ENCODE measurements at regions of chr4 and their contacts with region 1.

Region 1: GRCh38 chr4:153344131-153345010 is at the start of gene MND1:
- DNase-seq: peak; percentile 64
- ATAC-seq: peak; percentile 90
- H3K4me3 ChIP-seq: peak within 1 kb of the TSS; percentile 79 to 83 (median 81)
- H3K27ac ChIP-seq: peak within 1 kb of the TSS; percentile 72
- H3K4me1 ChIP-seq: peaks cover 44% of the 10 kb centered on the region
- H3K27me3 ChIP-seq: no peaks in the 10 kb centered on the region; a peak in 1 of 5 replicates
- CTCF ChIP-seq: peak; percentile 86
- EP300 ChIP-seq: peak in 1 of 2 experiments; percentile 20; a peak in 1 of 4 replicates
- POLR2A ChIP-seq: peak; percentile 69 to 74
- RAD21 ChIP-seq: peak; percentile 88
- total RNA-seq, gene MND1: 30.7 and 40.7 TPM in 2 replicates

Region 2: GRCh38 chr4:153432968-153433753 is 88.8 kb after region 1 on chr4:
- CTCF ChIA-PET with region 1: no interaction called
- POLR2A ChIA-PET with region 1: no interaction called
- in situ Hi-C with region 1: no loop called
- intact Hi-C with region 1: loop called (anchors 1 kb)
- DNase-seq: peak; percentile 79
- ATAC-seq: peak; percentile 95
- H3K4me3 ChIP-seq: no peak overlapping the region
- H3K27ac ChIP-seq: no peak overlapping the region
- H3K4me1 ChIP-seq: peaks cover 15% of the 10 kb centered on the region
- H3K27me3 ChIP-seq: no peaks in the 10 kb centered on the region
- CTCF ChIP-seq: peak; percentile 83
- EP300 ChIP-seq: no peak
- POLR2A ChIP-seq: no peak
- RAD21 ChIP-seq: peak; percentile 86

Region 3: GRCh38 chr4:153466081-153466948 is 121.9 kb after region 1 on chr4 and contains the start of gene TMEM131L:
- CTCF ChIA-PET with region 1: no interaction called
- POLR2A ChIA-PET with region 1: no interaction called
- in situ Hi-C with region 1: no loop called
- intact Hi-C with region 1: loop called (anchors 2 kb)
- DNase-seq: peak; percentile 29
- ATAC-seq: peak; percentile 88
- H3K4me3 ChIP-seq: peak within 1 kb of the TSS; percentile 77 to 89 (median 86)
- H3K27ac ChIP-seq: no peak within 1 kb of the TSS
- H3K4me1 ChIP-seq: peaks cover 26% of the 10 kb centered on the region
- H3K27me3 ChIP-seq: peaks cover 0 to 12% of the 10 kb centered on the region in 2 experiments; a peak in 3 of 5 replicates
- CTCF ChIP-seq: peak; percentile 23; the same call in 1 of the 2 replicates
- EP300 ChIP-seq: no peak
- POLR2A ChIP-seq: peak; percentile 50 to 53; a peak in 3 of 4 replicates
- RAD21 ChIP-seq: no peak
- total RNA-seq, gene TMEM131L: 2.4 and 4.5 TPM in 2 replicates

Region 4: GRCh38 chr4:153643406-153644383 is 299.3 kb after region 1 on chr4:
- CTCF ChIA-PET with region 1: interaction called, 7 read pairs
- POLR2A ChIA-PET with region 1: no interaction called
- in situ Hi-C with region 1: no loop called
- intact Hi-C with region 1: loop called (anchors 1 kb)
- DNase-seq: peak; percentile 66
- ATAC-seq: peak; percentile 68
- H3K4me3 ChIP-seq: peak overlapping the region in 1 of 3 experiments; percentile 16; a peak in 1 of 6 replicates
- H3K27ac ChIP-seq: no peak overlapping the region
- H3K4me1 ChIP-seq: peaks cover 22% of the 10 kb centered on the region
- H3K27me3 ChIP-seq: no peaks in the 10 kb centered on the region; a peak in 1 of 5 replicates
- CTCF ChIP-seq: peak; percentile 60
- EP300 ChIP-seq: no peak
- POLR2A ChIP-seq: no peak
- RAD21 ChIP-seq: no peak

Region 5: DNA sequence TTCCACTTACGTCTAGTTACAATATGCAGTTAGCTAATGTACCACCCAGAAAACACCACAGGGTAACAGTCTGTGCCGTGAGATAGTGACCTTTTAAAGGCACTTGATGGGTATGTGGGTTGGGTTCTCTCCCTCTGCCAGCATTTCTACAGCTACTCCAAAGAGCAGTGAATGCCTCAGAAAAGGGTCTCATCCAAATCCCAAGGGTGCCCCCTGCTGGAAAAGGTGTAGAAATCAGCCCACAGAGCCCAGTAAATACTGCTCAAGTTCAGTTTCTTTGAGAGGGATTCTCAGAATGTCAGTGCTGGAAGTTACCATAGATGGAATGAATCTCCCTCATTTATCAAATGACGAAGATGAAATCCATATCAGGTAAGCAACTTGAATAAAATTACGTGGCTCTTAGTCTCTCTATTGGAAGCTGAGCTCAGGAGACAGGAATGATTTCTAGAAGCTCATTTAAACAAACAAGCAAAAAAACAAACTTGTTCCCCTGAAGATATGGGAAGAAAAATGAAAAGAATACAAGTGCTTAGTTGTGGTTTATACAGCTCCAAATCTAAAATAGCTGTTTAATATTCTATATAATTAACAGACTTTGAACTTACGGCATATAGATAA is 405.9 kb after region 1 on chr4:
- CTCF ChIA-PET with region 1: no interaction called
- POLR2A ChIA-PET with region 1: no interaction called
- in situ Hi-C with region 1: no loop called
- intact Hi-C with region 1: loop called (anchors 1 kb)
- DNase-seq: peak; percentile 61
- ATAC-seq: peak; percentile 91
- H3K4me3 ChIP-seq: no peak overlapping the region
- H3K27ac ChIP-seq: no peak overlapping the region
- H3K4me1 ChIP-seq: no peaks in the 10 kb centered on the region
- H3K27me3 ChIP-seq: 0 out of 5 replicates have a peak, but pooled peaks cover 0 to 5% of the 10 kb centered on the region in 2 experiments
- CTCF ChIP-seq: peak; percentile 81
- EP300 ChIP-seq: no peak
- POLR2A ChIP-seq: no peak
- RAD21 ChIP-seq: no peak

Measured in HepG2 (cell line).